MCF 10A (cell line): ENCODE measurements at regions of chr7 and their contacts with region 1.

Region 1: GRCh38 chr7:112069879-112070321 is 136.3 kb downstream of the DOCK4 start:
- DNase-seq: peak; percentile 12
- H3K4me3 Mint-ChIP-seq: no peak overlapping the region
- H3K27ac Mint-ChIP-seq: no peak overlapping the region
- H3K4me1 Mint-ChIP-seq: peaks cover 21% of the 10 kb centered on the region
- H3K27me3 Mint-ChIP-seq: no peaks in the 10 kb centered on the region
- CTCF ChIP-seq: no peak

Region 2: GRCh38 chr7:111059833-111060232 is 1010.1 kb before region 1 on chr7:
- CTCF ChIA-PET with region 1: no interaction called
- POLR2A ChIA-PET with region 1: no interaction called
- intact Hi-C with region 1: no loop called
- DNase-seq: no peak
- H3K4me3 Mint-ChIP-seq: no peak overlapping the region
- H3K27ac Mint-ChIP-seq: no peak overlapping the region
- H3K4me1 Mint-ChIP-seq: no peaks in the 10 kb centered on the region
- H3K27me3 Mint-ChIP-seq: no peaks in the 10 kb centered on the region
- CTCF ChIP-seq: no peak

Region 3: GRCh38 chr7:111887734-111888133 is 182.2 kb before region 1 on chr7:
- CTCF ChIA-PET with region 1: no interaction called
- POLR2A ChIA-PET with region 1: no interaction called
- intact Hi-C with region 1: no loop called
- DNase-seq: no peak
- H3K4me3 Mint-ChIP-seq: no peak overlapping the region
- H3K27ac Mint-ChIP-seq: no peak overlapping the region
- H3K4me1 Mint-ChIP-seq: no peaks in the 10 kb centered on the region
- H3K27me3 Mint-ChIP-seq: no peaks in the 10 kb centered on the region
- CTCF ChIP-seq: no peak

Region 4: GRCh38 chr7:112080441-112080840 is 10.5 kb after region 1 on chr7:
- CTCF ChIA-PET with region 1: interaction called, 3 read pairs
- POLR2A ChIA-PET with region 1: interaction called, 13 read pairs
- intact Hi-C with region 1: no loop called
- DNase-seq: peak; percentile 86
- H3K4me3 Mint-ChIP-seq: peak overlapping the region; percentile 42
- H3K27ac Mint-ChIP-seq: peak overlapping the region; percentile 89
- H3K4me1 Mint-ChIP-seq: peaks cover 24% of the 10 kb centered on the region
- H3K27me3 Mint-ChIP-seq: no peaks in the 10 kb centered on the region
- CTCF ChIP-seq: no peak